ENCODE measurements at regions of chr2 and their contacts with region 1.

Region 1: DNA sequence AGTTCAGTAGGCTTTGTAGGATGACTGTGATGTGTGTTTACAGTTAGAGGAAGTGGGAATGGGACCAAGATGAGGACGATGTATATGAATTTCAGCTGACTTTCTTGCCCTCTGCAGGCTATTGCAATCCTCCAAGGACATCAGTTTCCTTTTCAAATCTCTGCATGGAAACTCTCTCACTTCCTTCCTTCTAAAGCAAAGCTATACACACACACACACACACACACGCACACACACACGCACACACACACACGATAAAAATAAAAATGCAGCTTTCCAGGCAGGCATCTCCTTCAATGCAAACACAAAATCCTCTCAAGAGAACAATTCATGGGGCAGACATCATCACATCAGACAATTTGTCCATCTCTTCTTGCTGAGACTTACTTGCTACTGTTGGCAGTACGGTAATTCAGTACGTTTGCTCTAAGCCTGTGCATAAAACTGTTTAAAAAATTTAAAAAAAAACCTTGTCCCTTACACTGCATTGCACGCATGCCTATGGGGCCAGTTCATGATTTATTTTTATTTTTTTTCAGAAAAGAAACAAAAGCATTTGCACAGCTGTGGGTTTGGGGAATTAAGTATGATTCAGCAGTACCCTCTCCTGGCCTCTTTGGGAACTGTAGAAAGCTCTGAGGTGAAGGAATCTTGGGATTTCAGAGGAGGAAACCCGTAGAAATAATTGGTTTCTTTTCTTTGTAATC is 27.1 kb upstream of the ICOS start:
- DNase-seq: peak; percentile 32
- ATAC-seq: peak; percentile 83
- H3K4me3 Mint-ChIP-seq: no peak overlapping the region
- H3K27ac Mint-ChIP-seq: peak overlapping the region; percentile 11
- H3K4me1 Mint-ChIP-seq: peaks cover 26% of the 10 kb centered on the region
- H3K27me3 Mint-ChIP-seq: peaks cover 5% of the 10 kb centered on the region
- CTCF ChIP-seq: peak; percentile 96

Region 2: GRCh38 chr2:203858176-203858575 is 51.2 kb before region 1 on chr2:
- CTCF ChIA-PET with region 1: interaction called, 15 read pairs
- POLR2A ChIA-PET with region 1: no interaction called
- intact Hi-C with region 1: loop called (anchors 2 kb)
- DNase-seq: peak; percentile 55
- ATAC-seq: no peak
- H3K4me3 Mint-ChIP-seq: no peak overlapping the region
- H3K27ac Mint-ChIP-seq: no peak overlapping the region
- H3K4me1 Mint-ChIP-seq: peaks cover 67% of the 10 kb centered on the region
- H3K27me3 Mint-ChIP-seq: no peaks in the 10 kb centered on the region
- CTCF ChIP-seq: no peak

Region 3: GRCh38 chr2:203878063-203878462 is 31.4 kb before region 1 on chr2:
- CTCF ChIA-PET with region 1: interaction called, 10 read pairs
- POLR2A ChIA-PET with region 1: interaction called, 6 read pairs
- intact Hi-C with region 1: no loop called
- DNase-seq: no peak
- ATAC-seq: no peak
- H3K4me3 Mint-ChIP-seq: no peak overlapping the region
- H3K27ac Mint-ChIP-seq: no peak overlapping the region
- H3K4me1 Mint-ChIP-seq: peaks cover 23% of the 10 kb centered on the region
- H3K27me3 Mint-ChIP-seq: no peaks in the 10 kb centered on the region
- CTCF ChIP-seq: no peak

Region 4: GRCh38 chr2:203893401-203893800 is 16.0 kb before region 1 on chr2:
- CTCF ChIA-PET with region 1: interaction called, 15 read pairs
- POLR2A ChIA-PET with region 1: interaction called, 3 read pairs
- intact Hi-C with region 1: no loop called
- DNase-seq: no peak
- ATAC-seq: no peak
- H3K4me3 Mint-ChIP-seq: no peak overlapping the region
- H3K27ac Mint-ChIP-seq: peak overlapping the region; percentile 82
- H3K4me1 Mint-ChIP-seq: peaks cover 56% of the 10 kb centered on the region
- H3K27me3 Mint-ChIP-seq: no peaks in the 10 kb centered on the region
- CTCF ChIP-seq: no peak

Region 5: GRCh38 chr2:204060841-204061240 is 151.4 kb after region 1 on chr2:
- CTCF ChIA-PET with region 1: no interaction called
- POLR2A ChIA-PET with region 1: no interaction called
- intact Hi-C with region 1: no loop called
- DNase-seq: no peak
- ATAC-seq: no peak
- H3K4me3 Mint-ChIP-seq: no peak overlapping the region
- H3K27ac Mint-ChIP-seq: no peak overlapping the region
- H3K4me1 Mint-ChIP-seq: no peaks in the 10 kb centered on the region
- H3K27me3 Mint-ChIP-seq: peaks cover 1% of the 10 kb centered on the region
- CTCF ChIP-seq: no peak

Measured in activated CD8-positive, alpha-beta T cell treated with anti-CD3 and anti-CD28 coated beads for 36 hours (primary cell).